ENCODE measurements at regions of chr12 and their contacts with region 1.

Region 1: GRCh38 chr12:121499929-121500793 is 80.7 kb downstream of the KDM2B start:
- DNase-seq: peak; percentile 71
- H3K4me3 ChIP-seq: peak overlapping the region in 1 of 3 experiments; percentile 34
- H3K27ac ChIP-seq: no peak overlapping the region
- H3K4me1 ChIP-seq: peaks cover 3% of the 10 kb centered on the region
- H3K27me3 ChIP-seq: no peaks in the 10 kb centered on the region
- CTCF ChIP-seq: peak; percentile 91 to 95
- POLR2A ChIP-seq: no peak

Region 2: GRCh38 chr12:121530600-121531355 is 30.6 kb after region 1 on chr12:
- CTCF ChIA-PET with region 1: interaction called, 4 read pairs
- POLR2A ChIA-PET with region 1: interaction called, 4 read pairs
- dilution Hi-C with region 1: no loop called
- intact Hi-C with region 1: loop called (anchors 1 kb)
- DNase-seq: peak; percentile 72
- H3K4me3 ChIP-seq: no peak overlapping the region
- H3K27ac ChIP-seq: no peak overlapping the region
- H3K4me1 ChIP-seq: peaks cover 3% of the 10 kb centered on the region
- H3K27me3 ChIP-seq: no peaks in the 10 kb centered on the region
- CTCF ChIP-seq: no peak
- POLR2A ChIP-seq: no peak

Region 3: DNA sequence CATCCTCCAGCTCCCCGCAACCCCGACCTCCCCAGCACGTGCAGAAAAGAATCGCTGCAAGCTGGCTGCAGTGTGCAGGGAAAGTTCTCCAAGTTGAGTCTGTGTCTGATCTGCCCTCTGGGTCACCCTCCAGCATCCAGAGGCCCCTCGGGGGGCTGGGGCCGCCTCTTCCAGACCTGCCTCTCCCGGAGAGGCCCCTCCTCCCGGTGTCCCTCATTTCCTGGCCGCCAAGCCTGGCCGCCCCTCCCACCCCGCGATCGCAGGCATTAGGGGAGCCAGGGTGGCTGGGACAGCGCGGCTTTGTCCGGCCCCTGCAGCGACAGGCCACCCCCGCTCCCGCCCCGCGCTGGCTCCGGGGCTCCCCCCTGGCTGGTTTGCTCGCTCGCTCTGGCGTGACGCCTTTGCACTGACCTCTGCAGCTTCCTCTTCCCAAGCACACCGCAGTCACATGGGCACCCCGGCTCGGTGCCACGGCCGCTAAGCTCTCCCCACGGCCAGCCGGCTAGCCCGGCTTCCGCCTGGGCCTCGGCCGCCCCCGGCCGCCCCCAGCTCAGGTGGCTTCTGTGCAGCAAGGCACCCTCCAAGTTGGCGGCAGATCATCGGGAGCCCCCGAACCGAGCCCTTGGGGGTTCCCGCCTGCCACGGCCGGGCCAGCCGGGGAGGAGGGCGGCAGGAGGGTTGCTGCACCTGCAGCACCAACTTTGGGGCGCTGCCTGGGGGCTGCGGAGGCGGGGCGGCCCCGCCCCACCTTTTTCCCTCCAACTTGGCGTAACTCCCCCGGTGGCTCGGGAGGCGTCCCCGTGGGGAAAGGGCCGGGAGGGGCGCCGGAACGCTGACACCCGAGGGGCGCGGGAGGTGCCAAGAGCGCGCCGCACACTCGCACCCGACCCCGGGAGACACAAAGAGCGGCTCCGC is 37.0 kb after region 1 on chr12:
- CTCF ChIA-PET with region 1: interaction called, 15 read pairs
- POLR2A ChIA-PET with region 1: no interaction called
- dilution Hi-C with region 1: no loop called
- intact Hi-C with region 1: loop called (anchors 2 kb)
- DNase-seq: peak; percentile 74
- H3K4me3 ChIP-seq: peak overlapping the region; percentile 38 to 63 (median 56)
- H3K27ac ChIP-seq: peak overlapping the region; percentile 20
- H3K4me1 ChIP-seq: peaks cover 20% of the 10 kb centered on the region
- H3K27me3 ChIP-seq: no peaks in the 10 kb centered on the region
- CTCF ChIP-seq: no peak
- POLR2A ChIP-seq: no peak

Region 4: DNA sequence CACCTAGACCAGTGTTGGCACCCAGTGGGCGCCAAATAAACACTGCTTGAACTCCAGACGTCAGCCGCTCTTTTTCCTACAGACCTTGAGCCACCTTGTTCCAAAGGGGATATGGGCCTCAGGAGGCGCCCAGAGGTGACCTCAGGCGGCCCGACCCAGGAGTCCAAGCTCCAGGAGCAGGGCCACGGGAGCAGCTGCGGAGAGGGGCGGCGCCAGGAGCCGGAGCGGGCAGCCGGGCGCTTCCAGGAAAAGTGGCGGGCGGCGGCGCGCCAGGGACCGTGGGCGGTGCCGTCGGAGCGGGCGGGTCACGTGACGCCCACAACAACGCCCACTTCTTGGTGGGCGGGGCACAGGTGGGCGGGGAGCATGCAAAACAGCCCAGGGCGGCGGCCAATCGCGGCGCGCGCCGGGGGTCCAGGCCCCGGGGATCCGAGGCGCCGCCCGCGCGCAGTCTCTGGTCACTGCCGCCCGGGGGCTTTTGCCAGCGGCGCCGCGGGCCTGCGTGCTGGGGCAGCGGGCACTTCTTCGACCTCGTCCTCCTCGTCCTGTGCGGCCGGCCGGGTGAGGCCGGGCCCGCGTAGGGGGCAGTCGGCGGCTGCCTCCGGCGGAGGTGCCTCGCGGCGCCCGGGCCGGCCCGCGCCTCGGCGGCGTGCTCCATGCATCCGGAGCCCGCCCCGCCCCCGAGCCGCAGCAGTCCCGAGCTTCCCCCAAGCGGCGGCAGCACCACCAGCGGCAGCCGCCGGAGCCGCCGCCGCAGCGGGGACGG is 126.1 kb after region 1 on chr12 and contains the start of gene ORAI1:
- CTCF ChIA-PET with region 1: interaction called, 3 read pairs
- POLR2A ChIA-PET with region 1: no interaction called
- dilution Hi-C with region 1: no loop called
- intact Hi-C with region 1: loop called (anchors 2 kb)
- DNase-seq: peak; percentile 94
- H3K4me3 ChIP-seq: peak within 1 kb of the TSS; percentile 47 to 67 (median 55)
- H3K27ac ChIP-seq: peak within 1 kb of the TSS; percentile 77
- H3K4me1 ChIP-seq: peaks cover 43% of the 10 kb centered on the region
- H3K27me3 ChIP-seq: no peaks in the 10 kb centered on the region
- CTCF ChIP-seq: no peak
- POLR2A ChIP-seq: peak; percentile 92
- total RNA-seq, gene ORAI1: 29.0 and 30.5 TPM in 2 replicates

Region 5: DNA sequence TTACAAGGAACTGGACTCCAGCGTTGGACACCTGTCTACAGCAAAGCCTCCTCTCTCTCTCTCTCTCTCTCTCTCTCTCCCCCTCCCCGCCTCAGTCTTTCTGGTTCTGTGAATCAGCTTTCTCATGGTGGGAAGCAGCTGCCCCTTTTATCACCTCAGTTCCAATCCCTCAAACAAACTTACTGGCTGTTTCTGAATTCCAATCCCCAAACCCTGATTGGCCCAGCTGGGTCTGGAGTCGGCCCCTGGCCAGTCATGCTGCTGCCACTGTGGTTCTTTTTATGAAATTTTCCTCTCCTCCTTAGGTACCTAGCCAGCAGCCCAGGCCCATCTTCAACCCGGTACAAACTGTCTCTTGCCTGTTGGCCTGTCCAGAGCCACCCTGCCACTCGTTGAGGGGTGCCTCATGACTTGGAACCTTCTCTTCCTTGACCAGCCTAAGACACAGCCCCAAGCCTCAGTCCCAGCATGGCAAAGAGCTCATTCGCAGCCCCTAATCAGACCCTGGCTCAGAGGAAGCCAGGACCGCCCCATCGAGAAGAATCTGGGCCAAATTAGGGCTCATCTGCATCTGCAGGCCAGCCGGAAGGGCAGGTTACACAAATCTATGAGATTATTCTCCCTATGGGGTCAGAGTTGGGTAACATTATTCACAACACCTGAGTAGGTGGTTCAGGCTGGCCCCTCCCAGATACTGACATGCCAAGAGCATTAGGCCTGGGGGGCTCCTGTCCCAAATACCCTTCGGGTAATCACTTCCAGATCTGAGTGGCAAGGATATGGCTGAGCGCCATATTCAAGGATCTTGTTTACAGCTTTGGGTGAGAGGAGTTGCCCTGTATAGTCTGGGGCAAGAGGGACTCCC is 178.8 kb after region 1 on chr12:
- CTCF ChIA-PET with region 1: interaction called, 4 read pairs
- POLR2A ChIA-PET with region 1: no interaction called
- dilution Hi-C with region 1: no loop called
- intact Hi-C with region 1: loop called (anchors 1 kb)
- DNase-seq: no peak
- H3K4me3 ChIP-seq: no peak overlapping the region
- H3K27ac ChIP-seq: no peak overlapping the region
- H3K4me1 ChIP-seq: no peaks in the 10 kb centered on the region
- H3K27me3 ChIP-seq: no peaks in the 10 kb centered on the region
- CTCF ChIP-seq: no peak
- POLR2A ChIP-seq: no peak

Region 6: DNA sequence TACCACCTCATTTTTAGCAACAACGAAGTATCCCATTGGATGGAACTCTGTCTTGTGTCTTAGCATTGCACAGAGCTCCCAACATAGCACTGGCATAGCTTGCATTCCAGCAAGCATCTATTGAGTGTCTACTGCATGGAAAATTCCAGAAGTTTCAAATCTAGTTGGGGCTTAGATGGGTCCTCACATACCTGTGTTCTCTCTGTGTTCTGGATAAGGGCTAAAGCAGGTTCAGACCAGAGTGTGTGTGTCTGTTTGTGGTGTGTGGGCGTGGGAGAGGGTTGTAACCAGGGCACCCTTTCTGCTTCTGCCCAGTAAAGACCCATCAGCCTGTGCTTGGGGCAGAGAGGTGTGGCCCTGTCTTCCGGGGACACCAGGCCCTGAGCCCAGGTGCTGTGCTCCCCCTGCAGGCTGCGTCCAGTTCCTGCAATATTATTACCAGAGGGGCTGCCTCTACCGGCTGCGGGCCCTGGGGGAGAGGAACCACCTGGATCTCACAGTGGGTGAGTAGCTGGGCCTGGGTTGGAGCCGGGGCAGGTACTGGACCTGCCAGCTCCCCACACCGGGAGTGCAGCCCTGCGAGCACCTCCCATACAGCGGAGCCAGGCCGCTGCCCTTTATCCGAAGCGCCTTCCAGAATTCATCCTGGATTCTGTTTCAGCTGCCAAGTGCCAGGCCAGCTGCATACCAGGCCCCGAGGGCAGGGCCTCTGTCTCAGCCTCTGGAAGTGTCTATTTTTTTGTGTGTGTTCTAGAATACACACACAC is 273.0 kb after region 1 on chr12:
- CTCF ChIA-PET with region 1: no interaction called
- POLR2A ChIA-PET with region 1: no interaction called
- dilution Hi-C with region 1: no loop called
- intact Hi-C with region 1: loop called (anchors 10 kb)
- DNase-seq: peak; percentile 40
- H3K4me3 ChIP-seq: no peak overlapping the region
- H3K27ac ChIP-seq: no peak overlapping the region
- H3K4me1 ChIP-seq: no peaks in the 10 kb centered on the region
- H3K27me3 ChIP-seq: no peaks in the 10 kb centered on the region
- CTCF ChIP-seq: peak; percentile 80
- POLR2A ChIP-seq: no peak

Measured in endothelial cell of umbilical vein (primary cell).